ENCODE measurements at regions of chr1 and their contacts with region 1.

Region 1: GRCh38 chr1:67853704-67854103 is 20.4 kb upstream of the GNG12 start:
- DNase-seq: no peak

Region 2: GRCh38 chr1:67766141-67766978 is 87.3 kb before region 1 on chr1:
- intact Hi-C with region 1: loop called (anchors 5 kb)
- DNase-seq: no peak

Region 3: GRCh38 chr1:68010090-68010489 is 156.4 kb after region 1 on chr1:
- intact Hi-C with region 1: loop called (anchors 5 kb)
- DNase-seq: no peak

Region 4: DNA sequence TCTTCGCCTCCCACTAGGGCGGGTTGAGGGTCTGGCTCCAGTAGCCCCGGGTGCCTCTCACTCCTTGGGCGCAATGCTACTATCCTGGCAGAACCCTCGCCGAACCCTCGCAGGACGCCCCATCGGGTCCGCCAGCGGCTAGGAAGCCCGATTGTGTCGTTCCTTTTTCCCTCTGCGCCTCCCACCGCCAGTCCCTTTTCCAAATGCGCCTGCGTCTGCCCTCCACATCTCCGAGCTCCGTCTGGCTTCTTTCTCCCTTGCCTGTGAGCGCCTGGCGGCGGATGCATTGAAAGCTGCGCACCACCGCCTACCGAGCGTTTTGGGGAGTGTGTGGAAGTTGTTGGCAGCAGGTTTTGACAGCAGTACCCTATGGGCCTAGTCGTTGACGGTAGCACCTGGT is 197.8 kb after region 1 on chr1:
- intact Hi-C with region 1: loop called (anchors 2 kb)
- DNase-seq: no peak

Region 5: DNA sequence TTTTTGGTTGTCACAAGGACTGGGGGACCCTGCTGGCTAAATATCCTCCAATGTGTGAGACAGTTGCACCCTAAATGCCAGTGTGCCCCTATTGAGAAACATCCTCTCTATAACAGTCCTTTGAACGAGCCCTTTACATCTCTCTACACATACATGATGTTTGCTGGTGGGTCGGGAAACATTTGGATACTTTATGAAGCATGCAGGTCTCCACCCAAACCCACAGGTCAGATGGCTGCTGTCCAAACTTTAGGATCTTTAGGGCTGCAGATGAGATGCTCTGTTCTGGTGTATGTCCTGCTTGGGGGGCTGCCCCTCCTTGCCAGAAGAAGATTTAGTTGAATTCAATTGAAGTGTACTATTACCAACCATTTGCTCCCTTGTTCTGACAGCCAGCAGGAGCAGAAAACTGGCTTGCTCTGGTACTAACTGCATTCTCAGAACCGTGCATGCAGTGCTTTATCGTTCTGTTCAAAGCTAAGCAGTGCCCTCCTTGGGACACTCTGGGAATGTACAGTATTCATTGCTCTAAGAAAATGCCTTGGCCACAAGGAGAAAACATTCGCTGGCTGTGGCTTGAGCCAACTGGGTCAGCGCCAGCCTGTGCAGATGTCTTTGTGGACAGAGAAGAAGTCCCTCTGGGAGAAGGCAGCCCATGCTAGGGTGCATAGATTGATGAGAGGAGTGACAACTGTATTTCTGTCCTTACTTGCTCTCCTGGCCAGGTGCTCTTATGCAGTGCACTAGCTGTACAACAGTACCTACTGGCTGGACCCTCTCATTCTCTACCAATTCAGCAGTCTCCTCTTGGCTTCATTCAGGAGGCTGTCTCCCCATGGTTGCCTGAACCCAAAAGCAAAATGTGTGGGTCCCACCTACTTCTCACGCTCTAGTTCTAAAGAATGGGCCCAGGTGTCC is 258.1 kb after region 1 on chr1:
- intact Hi-C with region 1: loop called (anchors 2 kb)
- DNase-seq: peak; percentile 82

Region 6: DNA sequence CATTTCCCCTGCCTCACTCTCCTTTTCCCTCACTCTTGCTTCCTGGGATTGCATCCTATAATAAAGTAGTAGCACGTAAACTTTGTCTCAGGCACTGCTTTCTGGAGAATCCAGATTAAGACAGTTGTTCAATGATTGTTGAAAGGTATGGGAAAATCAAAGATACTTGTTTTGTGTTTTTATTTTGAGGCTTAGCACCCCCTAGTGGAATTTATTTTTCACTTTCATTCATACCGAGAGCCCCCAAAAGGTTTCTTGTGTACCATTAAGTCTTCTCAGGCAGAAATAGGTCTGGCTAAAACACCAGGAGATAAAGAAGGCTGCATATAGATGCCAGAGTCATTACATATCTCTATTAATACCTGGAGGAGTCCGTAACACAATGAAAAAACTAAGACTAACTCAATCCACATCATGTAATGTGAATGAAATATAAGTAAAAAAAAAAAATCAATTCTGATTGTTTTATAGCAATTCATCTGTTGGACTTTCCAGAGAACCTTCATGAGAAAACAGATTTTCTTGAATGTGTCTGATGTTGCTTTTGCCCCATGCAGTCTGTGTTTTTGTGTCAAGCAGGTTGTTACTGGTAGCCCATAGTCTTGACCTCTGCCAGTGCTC is 492.6 kb after region 1 on chr1:
- intact Hi-C with region 1: loop called (anchors 5 kb)
- DNase-seq: no peak